GM10248 (cell line): ENCODE measurements at regions of chr2 and their contacts with region 1.

Region 1: DNA sequence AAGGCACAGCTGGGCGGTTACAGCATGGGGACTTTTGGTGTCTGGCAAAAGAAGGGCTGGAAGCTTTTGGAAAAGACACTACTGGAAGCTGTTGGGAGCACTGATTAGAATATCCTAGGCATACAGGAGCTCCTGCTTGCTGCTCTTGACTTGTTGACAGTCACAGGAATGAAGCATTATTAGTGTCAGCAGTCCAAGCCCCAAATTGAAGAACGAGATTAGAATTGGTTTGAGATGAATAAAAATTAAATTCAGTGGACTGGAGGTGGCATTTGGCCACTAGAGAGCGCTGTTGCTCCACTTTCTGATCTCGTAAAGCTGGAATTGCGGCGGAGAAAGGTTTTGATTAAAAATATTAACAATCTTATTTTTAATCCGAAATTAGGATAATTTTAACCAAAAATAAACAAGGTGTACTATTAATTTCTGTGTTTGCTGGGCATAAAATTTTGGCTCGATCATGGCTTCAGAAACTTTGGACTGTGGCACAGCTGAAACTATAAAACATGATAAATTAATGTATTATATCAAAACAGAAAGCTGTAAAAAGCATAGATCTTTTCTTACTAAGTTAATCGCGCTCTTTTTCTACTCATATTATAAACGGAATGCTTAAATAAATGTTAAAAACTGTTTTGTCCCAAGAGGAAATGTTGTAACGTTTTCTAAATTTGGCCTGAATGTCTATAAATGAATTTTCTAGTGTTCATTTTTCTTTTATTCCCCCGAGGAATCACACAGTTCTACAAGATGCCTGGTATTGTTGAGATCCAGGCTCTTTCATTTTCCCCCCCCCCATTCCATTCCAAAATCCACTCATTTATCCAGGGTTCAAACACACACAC is 2.4 kb upstream of the HOXD8 start:
- DNase-seq: peak; percentile 50
- CTCF ChIP-seq: peak; percentile 79

Region 2: DNA sequence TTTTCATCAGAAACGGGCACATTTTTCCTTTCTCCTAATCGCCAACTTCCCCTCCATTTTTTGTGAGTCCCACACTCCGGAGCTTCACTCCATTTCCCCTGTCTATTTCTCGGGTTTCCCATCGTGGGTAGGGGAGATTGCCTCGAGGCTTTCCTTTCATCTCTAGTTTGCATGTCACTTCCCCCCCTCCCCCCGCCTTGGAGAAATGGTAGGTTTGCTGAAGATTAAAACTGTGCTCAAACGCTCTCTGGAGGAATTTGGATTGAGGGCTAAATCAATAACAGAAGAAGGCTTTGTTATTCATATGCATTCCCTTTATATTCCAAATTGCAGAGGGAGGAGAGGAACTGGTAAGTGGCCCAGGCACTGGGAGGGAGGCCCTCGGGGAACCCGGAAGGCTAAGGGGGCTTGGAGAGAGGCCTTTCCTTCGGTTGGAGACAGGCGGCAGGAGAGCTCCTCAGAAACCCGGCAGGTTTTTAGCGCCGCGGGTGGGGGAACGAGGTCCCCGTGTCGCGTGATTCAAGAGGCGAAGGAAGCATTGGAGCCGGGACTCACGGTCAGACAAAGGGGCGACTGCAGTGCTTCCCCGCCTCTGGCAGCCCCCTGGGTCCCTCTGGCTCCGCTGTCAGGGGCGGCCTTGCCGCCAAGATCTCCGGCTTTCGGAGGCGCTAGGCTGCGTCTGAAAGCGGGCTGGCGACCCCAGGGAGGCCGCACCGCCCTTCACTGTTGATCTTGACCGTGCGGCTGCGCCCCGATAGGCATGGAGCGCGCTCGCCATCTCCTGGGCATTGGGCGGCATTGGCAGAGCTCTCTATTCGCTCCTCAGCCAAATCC is 29.9 kb before region 1 on chr2:
- CTCF ChIA-PET with region 1: interaction called, 18 read pairs
- POLR2A ChIA-PET with region 1: no interaction called
- DNase-seq: peak; percentile 79
- CTCF ChIP-seq: peak; percentile 74

Region 3: GRCh38 chr2:176234156-176234555 is 107.0 kb after region 1 on chr2:
- CTCF ChIA-PET with region 1: no interaction called
- POLR2A ChIA-PET with region 1: no interaction called
- DNase-seq: no peak
- CTCF ChIP-seq: no peak

Region 4: DNA sequence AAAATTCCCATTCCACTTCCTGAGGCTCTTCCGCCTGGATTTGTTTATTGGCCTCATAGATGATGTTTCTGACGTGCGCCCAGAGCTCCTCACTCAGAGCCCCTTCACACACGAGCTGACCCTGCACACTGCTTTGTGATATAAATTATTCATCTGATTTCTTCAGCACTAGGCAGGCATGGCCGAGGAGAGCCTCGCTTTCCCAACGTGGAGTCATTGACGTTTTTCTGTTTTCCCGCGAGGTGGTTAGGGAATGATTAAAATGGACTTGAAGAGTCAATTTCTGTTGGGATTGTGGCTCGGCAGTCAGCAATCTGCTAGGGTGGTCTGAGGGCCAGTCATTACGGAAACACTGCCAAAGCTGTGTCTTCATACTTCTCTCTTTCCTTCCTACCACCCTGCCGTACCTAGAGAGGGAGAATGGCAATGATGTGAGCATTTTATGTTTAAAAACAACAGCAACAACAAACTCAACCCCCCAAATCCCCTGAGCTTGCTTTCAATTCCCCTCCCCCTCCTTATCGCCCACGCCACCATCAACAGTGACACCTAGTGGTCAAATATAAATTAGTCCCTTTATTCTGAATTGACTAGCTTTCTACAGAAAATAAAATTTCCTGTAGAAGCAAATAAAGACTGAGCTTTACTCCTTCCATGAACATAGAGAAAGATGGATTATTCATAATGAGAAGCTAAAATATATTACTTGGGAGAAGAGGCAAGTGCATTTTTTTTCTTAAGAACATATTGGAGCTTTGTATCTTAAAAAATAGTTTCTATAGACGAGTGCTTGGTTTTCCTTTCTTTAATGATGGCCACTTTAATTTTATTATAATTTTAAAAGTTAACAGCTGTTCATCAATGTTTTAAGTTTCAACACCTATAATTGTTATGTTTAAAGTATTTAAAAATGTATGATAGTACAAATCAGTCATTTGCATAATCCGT is 427.2 kb after region 1 on chr2:
- CTCF ChIA-PET with region 1: interaction called, 11 read pairs
- POLR2A ChIA-PET with region 1: no interaction called
- DNase-seq: peak; percentile 68
- CTCF ChIP-seq: peak; percentile 56

Region 5: GRCh38 chr2:176638167-176639015 is 511.2 kb after region 1 on chr2:
- CTCF ChIA-PET with region 1: interaction called, 15 read pairs
- POLR2A ChIA-PET with region 1: no interaction called
- DNase-seq: peak; percentile 83
- CTCF ChIP-seq: peak; percentile 89

Region 6: DNA sequence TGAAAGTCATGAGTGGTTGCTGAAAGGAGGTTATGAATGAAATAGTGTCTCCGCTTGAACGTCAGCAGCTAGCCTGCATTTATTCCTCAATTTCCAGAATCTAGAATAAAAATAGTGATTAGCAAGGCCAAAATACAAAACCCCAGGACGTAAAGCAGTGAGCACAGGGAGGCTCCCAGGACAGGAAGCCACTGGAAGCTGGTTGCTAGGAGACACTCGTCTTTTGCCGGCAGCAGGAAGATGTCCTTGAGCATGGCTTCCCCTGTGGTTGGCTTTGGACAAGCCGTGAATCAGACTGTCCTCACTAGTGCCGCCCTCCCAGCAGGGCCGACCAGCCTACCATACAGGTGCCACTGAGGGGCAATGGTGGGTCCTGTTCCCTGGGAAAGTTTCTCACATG is 516.5 kb after region 1 on chr2:
- CTCF ChIA-PET with region 1: interaction called, 12 read pairs
- POLR2A ChIA-PET with region 1: no interaction called
- DNase-seq: no peak
- CTCF ChIP-seq: no peak

Region 7: DNA sequence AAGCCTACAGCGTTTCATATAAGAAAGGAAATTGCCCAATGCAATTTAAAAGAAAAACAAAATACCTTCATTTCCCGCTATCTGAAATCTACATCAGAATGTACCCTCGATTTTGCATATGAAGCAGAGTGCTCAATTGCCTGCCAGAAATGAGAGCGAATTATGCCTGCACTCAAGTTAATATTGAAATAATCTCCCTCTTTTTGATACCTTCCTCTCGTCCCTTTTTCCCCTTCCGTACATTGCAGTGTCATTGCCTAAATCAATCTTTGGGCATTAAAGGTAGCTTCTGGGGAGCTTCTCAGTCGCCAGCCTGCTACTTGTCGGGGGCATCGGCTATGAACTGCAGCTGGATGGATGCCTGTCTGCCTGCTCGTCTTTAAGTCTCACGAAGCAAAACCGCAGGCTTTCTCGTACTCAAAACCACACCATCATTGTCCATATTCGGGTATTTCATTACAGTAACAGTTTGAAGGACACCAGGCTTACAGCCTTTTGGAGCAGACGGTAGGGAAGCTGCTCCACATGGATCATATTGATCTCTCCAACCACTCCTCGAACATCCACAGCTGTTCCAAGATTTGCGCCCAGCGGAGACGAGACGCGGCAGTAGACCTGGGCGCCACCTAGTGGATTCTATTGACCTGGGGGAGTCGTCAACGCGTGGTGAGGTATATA is 1021.5 kb after region 1 on chr2:
- CTCF ChIA-PET with region 1: interaction called, 30 read pairs
- POLR2A ChIA-PET with region 1: no interaction called
- DNase-seq: peak; percentile 57
- CTCF ChIP-seq: peak; percentile 93